Tibial artery (tissue), 4 donors: ENCODE measurements at regions of chr6 and their contacts with region 1.

Region 1: DNA sequence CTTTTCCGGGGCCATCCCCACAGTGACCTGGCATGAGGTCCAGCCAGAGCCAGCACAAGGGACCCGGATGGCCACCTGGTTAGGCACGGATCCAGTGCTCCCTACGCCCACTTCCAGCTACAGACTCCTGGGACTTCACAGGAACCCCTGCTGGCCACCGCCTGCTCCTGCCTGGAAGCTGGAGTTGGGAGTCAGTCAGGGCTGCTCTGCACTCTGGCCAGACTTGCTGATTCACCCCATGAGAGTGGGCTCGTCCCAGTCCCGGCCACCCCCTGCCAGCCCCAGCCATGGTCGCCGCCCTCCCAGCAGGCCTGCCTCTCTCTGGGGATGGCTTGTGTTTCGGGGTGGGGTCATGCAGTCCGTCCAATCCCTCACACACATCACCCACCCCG is 125.8 kb downstream of the DLL1 start:
- DNase-seq: no peak
- H3K4me3 ChIP-seq: no peak overlapping the region
- H3K27ac ChIP-seq: no peak overlapping the region
- H3K4me1 ChIP-seq: peaks cover 0 to 21% (median 11%) of the 10 kb centered on the region in 4 donors
- H3K27me3 ChIP-seq: peaks cover 0 to 28% of the 10 kb centered on the region in 2 donors
- CTCF ChIP-seq: no peak

Region 2: GRCh38 chr6:170024952-170025911 is 139.8 kb before region 1 on chr6:
- intact Hi-C with region 1: loop called (anchors 5 kb)
- DNase-seq: peak; percentile 17 to 25
- H3K4me3 ChIP-seq: no peak overlapping the region
- H3K27ac ChIP-seq: no peak overlapping the region
- H3K4me1 ChIP-seq: peaks cover 0 to 21% (median 0%) of the 10 kb centered on the region in 4 donors
- H3K27me3 ChIP-seq: peaks cover 0 to 26% of the 10 kb centered on the region in 2 donors
- CTCF ChIP-seq: no peak

Region 3: GRCh38 chr6:170443151-170443662 is 278.1 kb after region 1 on chr6:
- intact Hi-C with region 1: no loop called
- DNase-seq: no peak
- H3K4me3 ChIP-seq: no peak overlapping the region
- H3K27ac ChIP-seq: no peak overlapping the region
- H3K4me1 ChIP-seq: peaks cover 0 to 3% (median 3%) of the 10 kb centered on the region in 4 donors
- H3K27me3 ChIP-seq: no peaks in the 10 kb centered on the region
- CTCF ChIP-seq: no peak